Astrocyte of the cerebellum (primary cell): ENCODE measurements at regions of chr4 and their contacts with region 1.

Region 1: GRCh38 chr4:121717680-121718237 is 21.0 kb upstream of the ANXA5 start:
- DNase-seq: no peak
- H3K4me3 ChIP-seq: no peak overlapping the region
- CTCF ChIP-seq: no peak

Region 2: DNA sequence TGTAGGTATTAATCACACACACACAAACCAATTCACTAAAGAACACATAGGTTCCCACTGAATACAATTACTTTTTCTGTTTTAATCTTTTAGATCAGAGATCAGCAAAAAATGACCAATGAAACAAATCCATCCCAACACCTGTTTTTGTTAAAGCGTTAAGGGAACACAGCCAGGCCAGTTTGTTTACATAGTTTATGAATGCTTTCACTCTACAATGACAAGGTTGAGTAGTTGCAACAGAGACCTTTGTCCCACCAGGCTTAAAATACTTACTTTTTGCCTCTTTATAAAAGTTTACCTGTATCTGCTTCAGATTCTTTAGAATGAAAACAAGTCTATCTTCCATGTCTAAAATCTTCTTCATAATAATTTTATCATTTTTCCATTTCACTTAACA is 216.9 kb before region 1 on chr4:
- in situ Hi-C with region 1: no loop called
- DNase-seq: no peak
- H3K4me3 ChIP-seq: no peak overlapping the region
- CTCF ChIP-seq: no peak

Region 3: GRCh38 chr4:121668368-121669162 is 49.2 kb before region 1 on chr4:
- in situ Hi-C with region 1: loop called (anchors 5 kb)
- DNase-seq: peak; percentile 94
- H3K4me3 ChIP-seq: no peak overlapping the region
- CTCF ChIP-seq: no peak

Region 4: DNA sequence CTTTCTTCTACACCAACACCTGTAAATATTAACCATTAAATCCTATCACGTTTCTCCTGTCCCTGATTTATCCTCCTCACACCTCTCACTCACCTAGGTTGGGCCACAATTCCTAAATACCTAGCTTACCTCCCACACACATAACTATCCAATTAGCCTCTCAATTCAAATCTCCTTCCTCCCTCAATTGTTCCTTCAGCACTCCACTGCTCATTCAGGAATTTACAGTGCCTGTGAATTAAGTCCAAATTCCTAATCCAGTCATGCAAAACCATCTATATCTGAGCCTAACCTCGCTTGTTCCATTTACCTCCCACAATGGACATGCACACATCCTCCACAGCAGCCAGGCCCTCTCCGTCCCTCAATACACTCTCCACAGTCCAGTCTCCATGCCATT is 38.5 kb before region 1 on chr4:
- in situ Hi-C with region 1: no loop called
- DNase-seq: no peak
- H3K4me3 ChIP-seq: no peak overlapping the region
- CTCF ChIP-seq: no peak